ENCODE measurements at regions of chr11 and their contacts with region 1.

Region 1: GRCh38 chr11:20127671-20128527 is 32.4 kb downstream of the DBX1 start:
- DNase-seq: peak; percentile 27 to 74 (median 68)
- ATAC-seq: peak; percentile 81
- H3K4me3 ChIP-seq: no peak overlapping the region
- H3K4me3 Mint-ChIP-seq: no peak overlapping the region
- H3K27ac ChIP-seq: no peak overlapping the region
- H3K27ac Mint-ChIP-seq: no peak overlapping the region
- H3K4me1 ChIP-seq: no peaks in the 10 kb centered on the region
- H3K4me1 Mint-ChIP-seq: peaks cover 7 to 14% (median 12%) of the 10 kb centered on the region in 7 donors
- H3K27me3 ChIP-seq: no peaks in the 10 kb centered on the region
- H3K27me3 Mint-ChIP-seq: peaks cover 7 to 23% (median 15%) of the 10 kb centered on the region in 5 donors

Region 2: DNA sequence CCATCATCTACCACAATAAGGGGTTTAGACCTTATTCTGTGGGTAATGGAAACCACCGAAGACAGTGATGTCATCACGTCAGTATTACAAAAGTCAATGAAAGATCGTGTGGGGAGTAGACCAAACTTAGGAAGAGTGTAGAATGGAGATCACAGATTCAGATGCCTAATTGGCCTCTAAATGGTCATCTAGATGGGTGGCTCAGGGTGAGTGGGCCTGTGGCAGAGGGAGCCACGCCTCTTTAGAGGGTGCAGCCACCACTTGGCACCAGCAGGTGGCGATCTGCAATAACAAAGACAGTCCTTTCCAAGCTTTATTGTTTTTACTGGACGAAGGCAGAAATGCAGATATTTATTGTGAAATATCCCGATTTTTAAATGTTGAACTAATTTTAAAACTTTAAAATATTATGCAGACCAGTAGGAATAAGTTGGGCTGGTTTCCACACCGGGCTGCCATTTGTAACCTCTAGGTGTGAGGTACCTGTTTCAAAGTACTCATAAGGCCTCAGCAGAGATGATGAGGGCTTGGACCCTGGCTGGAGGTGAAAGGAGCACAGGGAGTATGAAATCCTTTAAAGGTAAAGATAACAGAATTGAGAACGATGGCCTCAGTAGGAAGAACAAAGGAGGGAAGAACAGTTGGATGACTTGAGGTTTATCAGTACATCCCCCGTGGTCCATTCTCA is 189.6 kb before region 1 on chr11:
- CTCF ChIA-PET with region 1: no interaction called
- POLR2A ChIA-PET with region 1: no interaction called
- intact Hi-C with region 1: loop called in 1 of 2 experiments (anchors 5 kb)
- DNase-seq: peak in 1 of 9 donors; percentile 29
- ATAC-seq: peak; percentile 66
- H3K4me3 ChIP-seq: no peak overlapping the region
- H3K4me3 Mint-ChIP-seq: no peak overlapping the region
- H3K27ac ChIP-seq: no peak overlapping the region
- H3K27ac Mint-ChIP-seq: no peak overlapping the region
- H3K4me1 ChIP-seq: no peaks in the 10 kb centered on the region
- H3K4me1 Mint-ChIP-seq: no peaks in the 10 kb centered on the region
- H3K27me3 ChIP-seq: no peaks in the 10 kb centered on the region
- H3K27me3 Mint-ChIP-seq: peaks cover 0 to 4% (median 0%) of the 10 kb centered on the region in 5 donors

Region 3: DNA sequence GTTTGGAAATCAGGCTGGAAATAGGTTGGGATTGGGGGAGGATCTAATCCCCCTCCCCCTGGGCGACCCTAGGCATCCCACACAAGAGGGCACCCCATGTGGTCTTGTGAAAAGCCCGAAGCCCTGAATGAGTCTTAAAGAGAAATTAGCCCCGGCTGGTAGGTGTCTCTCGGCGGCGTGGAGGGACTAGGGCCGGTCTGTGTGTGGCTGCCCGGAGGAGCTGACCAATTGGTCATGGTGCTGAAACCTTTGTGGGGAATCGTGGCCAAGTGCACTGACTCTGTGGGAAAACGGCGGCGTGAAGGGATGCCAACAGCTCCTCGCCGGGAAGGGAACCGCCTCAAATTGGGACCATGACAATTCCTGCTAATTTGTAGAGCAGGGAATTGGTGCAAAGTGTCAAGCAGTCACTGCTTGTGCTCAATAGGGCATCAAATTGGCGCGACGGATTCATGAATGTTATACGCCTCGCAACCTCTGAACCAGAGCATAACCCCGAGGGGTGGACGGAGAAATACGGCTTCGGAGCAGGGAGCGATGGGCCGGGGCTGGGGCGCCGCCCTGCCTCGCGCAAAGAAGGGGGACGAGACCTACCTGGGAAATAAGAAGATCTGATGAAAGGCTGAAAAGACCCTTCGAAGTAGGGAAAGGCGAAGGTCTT is 30.8 kb after region 1 on chr11:
- CTCF ChIA-PET with region 1: interaction called, 3 read pairs
- POLR2A ChIA-PET with region 1: no interaction called
- intact Hi-C with region 1: loop called (anchors 1 to 2 kb)
- DNase-seq: peak in 1 of 9 donors; percentile 4
- ATAC-seq: no peak
- H3K4me3 ChIP-seq: no peak overlapping the region
- H3K4me3 Mint-ChIP-seq: peak overlapping the region; percentile 19 to 89 (median 56)
- H3K27ac ChIP-seq: no peak overlapping the region
- H3K27ac Mint-ChIP-seq: peak overlapping the region in 5 of 9 donors; percentile 17 to 79 (median 26)
- H3K4me1 ChIP-seq: peaks cover 5 to 9% of the 10 kb centered on the region in 2 donors
- H3K4me1 Mint-ChIP-seq: peaks cover 26 to 63% (median 50%) of the 10 kb centered on the region in 7 donors
- H3K27me3 ChIP-seq: peaks cover 12 to 39% of the 10 kb centered on the region in 2 donors
- H3K27me3 Mint-ChIP-seq: peaks cover 59 to 87% (median 74%) of the 10 kb centered on the region in 5 donors

Region 4: DNA sequence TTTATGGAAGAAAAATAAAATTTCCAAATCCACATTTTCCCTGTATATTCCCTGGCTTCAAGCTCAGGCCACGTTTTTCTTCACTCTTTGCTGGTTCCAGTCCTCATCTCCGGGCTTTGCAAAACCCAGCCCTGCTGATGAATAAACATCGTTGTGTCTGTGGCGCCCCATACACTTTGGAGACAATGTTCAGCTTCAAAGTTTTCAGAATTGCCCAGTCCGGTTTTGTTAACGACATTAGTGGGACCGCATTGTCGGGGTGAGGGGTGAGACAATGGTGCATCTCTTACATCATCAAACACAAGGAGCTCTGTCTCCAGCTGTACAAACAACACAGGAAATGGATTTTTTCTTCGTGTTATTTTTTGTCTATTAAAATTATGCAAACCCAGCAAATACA is 182.2 kb after region 1 on chr11:
- CTCF ChIA-PET with region 1: no interaction called
- POLR2A ChIA-PET with region 1: no interaction called
- intact Hi-C with region 1: no loop called
- DNase-seq: no peak
- ATAC-seq: no peak
- H3K4me3 ChIP-seq: no peak overlapping the region
- H3K4me3 Mint-ChIP-seq: no peak overlapping the region
- H3K27ac ChIP-seq: no peak overlapping the region
- H3K27ac Mint-ChIP-seq: no peak overlapping the region
- H3K4me1 ChIP-seq: no peaks in the 10 kb centered on the region
- H3K4me1 Mint-ChIP-seq: no peaks in the 10 kb centered on the region
- H3K27me3 ChIP-seq: no peaks in the 10 kb centered on the region
- H3K27me3 Mint-ChIP-seq: peaks cover 9 to 28% (median 16%) of the 10 kb centered on the region in 5 donors

Region 5: GRCh38 chr11:20355221-20356219 is 227.6 kb after region 1 on chr11:
- CTCF ChIA-PET with region 1: interaction called, 54 read pairs
- POLR2A ChIA-PET with region 1: no interaction called
- intact Hi-C with region 1: loop called (anchors 1 kb)
- DNase-seq: peak in 6 of 9 donors; percentile 14 to 38 (median 23)
- ATAC-seq: peak; percentile 62
- H3K4me3 ChIP-seq: no peak overlapping the region
- H3K4me3 Mint-ChIP-seq: no peak overlapping the region
- H3K27ac ChIP-seq: no peak overlapping the region
- H3K27ac Mint-ChIP-seq: no peak overlapping the region
- H3K4me1 ChIP-seq: peaks cover 4 to 5% of the 10 kb centered on the region in 2 donors
- H3K4me1 Mint-ChIP-seq: peaks cover 8 to 30% (median 14%) of the 10 kb centered on the region in 7 donors
- H3K27me3 ChIP-seq: no peaks in the 10 kb centered on the region
- H3K27me3 Mint-ChIP-seq: peaks cover 0 to 9% (median 0%) of the 10 kb centered on the region in 5 donors

Region 6: GRCh38 chr11:20609727-20610707 is 482.1 kb after region 1 on chr11:
- CTCF ChIA-PET with region 1: interaction called, 4 read pairs
- POLR2A ChIA-PET with region 1: no interaction called
- intact Hi-C with region 1: loop called in 1 of 2 experiments (anchors 1 kb)
- DNase-seq: peak in 7 of 9 donors; percentile 5 to 74 (median 36)
- ATAC-seq: peak; percentile 74
- H3K4me3 ChIP-seq: no peak overlapping the region
- H3K4me3 Mint-ChIP-seq: peak overlapping the region in 6 of 10 donors; percentile 39 to 65 (median 58)
- H3K27ac ChIP-seq: no peak overlapping the region
- H3K27ac Mint-ChIP-seq: no peak overlapping the region
- H3K4me1 ChIP-seq: no peaks in the 10 kb centered on the region
- H3K4me1 Mint-ChIP-seq: peaks cover 7 to 20% (median 11%) of the 10 kb centered on the region in 7 donors
- H3K27me3 ChIP-seq: peaks cover 0 to 16% of the 10 kb centered on the region in 2 donors
- H3K27me3 Mint-ChIP-seq: peaks cover 66 to 91% (median 81%) of the 10 kb centered on the region in 5 donors

Region 7: GRCh38 chr11:21511835-21512440 is 1384.0 kb after region 1 on chr11:
- CTCF ChIA-PET with region 1: no interaction called
- POLR2A ChIA-PET with region 1: no interaction called
- intact Hi-C with region 1: loop called in 1 of 2 experiments (anchors 10 kb)
- DNase-seq: peak in 1 of 9 donors; percentile 28
- ATAC-seq: peak; percentile 64
- H3K4me3 ChIP-seq: no peak overlapping the region
- H3K4me3 Mint-ChIP-seq: no peak overlapping the region
- H3K27ac ChIP-seq: no peak overlapping the region
- H3K27ac Mint-ChIP-seq: no peak overlapping the region
- H3K4me1 ChIP-seq: no peaks in the 10 kb centered on the region
- H3K4me1 Mint-ChIP-seq: no peaks in the 10 kb centered on the region
- H3K27me3 ChIP-seq: no peaks in the 10 kb centered on the region
- H3K27me3 Mint-ChIP-seq: no peaks in the 10 kb centered on the region